BJ (cell line): ENCODE measurements at regions of chr5 and their contacts with region 1.

Region 1: GRCh38 chr5:88729084-88729828 is 153.7 kb downstream of the MEF2C start:
- DNase-seq: peak; percentile 26
- H3K4me3 ChIP-seq: no peak overlapping the region
- H3K27me3 ChIP-seq: no peaks in the 10 kb centered on the region
- CTCF ChIP-seq: peak; percentile 66

Region 2: GRCh38 chr5:87780831-87781760 is 948.2 kb before region 1 on chr5:
- CTCF ChIA-PET with region 1: interaction called, 46 read pairs
- POLR2A ChIA-PET with region 1: no interaction called
- DNase-seq: peak; percentile 2
- H3K4me3 ChIP-seq: no peak overlapping the region
- H3K27me3 ChIP-seq: no peaks in the 10 kb centered on the region
- CTCF ChIP-seq: peak; percentile 95

Region 3: DNA sequence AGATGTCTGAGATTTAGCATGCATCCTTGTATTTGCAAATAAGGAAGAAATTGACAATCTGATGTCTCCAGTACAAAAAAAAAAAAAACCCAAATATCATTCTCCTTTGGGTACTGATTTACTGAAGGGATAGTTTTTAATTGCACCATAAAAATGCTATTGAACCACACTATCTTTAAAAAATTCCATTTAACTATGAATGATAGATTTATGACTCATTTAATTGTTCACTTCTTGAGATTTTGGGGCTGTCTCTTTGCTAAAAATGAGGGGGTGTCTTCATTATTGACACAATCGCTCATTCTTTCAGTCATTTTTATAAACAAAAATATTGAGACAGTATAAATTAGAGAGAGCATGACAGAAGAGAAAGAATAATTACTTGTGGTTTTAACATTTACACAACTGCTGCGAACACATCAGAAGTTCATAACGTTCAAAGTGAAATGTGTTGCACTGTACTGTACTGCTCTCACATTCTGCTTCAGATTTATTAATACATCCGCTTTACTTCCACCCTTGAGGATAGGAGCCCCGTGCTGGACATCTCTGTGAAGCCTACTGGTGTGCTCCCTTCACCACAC is 11.4 kb after region 1 on chr5:
- CTCF ChIA-PET with region 1: interaction called, 10 read pairs
- POLR2A ChIA-PET with region 1: no interaction called
- DNase-seq: no peak
- H3K4me3 ChIP-seq: no peak overlapping the region
- H3K27me3 ChIP-seq: no peaks in the 10 kb centered on the region
- CTCF ChIP-seq: no peak

Region 4: GRCh38 chr5:88845081-88845697 is 115.9 kb after region 1 on chr5:
- CTCF ChIA-PET with region 1: no interaction called
- POLR2A ChIA-PET with region 1: interaction called, 13 read pairs
- DNase-seq: no peak
- H3K4me3 ChIP-seq: no peak overlapping the region
- H3K27me3 ChIP-seq: no peaks in the 10 kb centered on the region
- CTCF ChIP-seq: no peak

Region 5: DNA sequence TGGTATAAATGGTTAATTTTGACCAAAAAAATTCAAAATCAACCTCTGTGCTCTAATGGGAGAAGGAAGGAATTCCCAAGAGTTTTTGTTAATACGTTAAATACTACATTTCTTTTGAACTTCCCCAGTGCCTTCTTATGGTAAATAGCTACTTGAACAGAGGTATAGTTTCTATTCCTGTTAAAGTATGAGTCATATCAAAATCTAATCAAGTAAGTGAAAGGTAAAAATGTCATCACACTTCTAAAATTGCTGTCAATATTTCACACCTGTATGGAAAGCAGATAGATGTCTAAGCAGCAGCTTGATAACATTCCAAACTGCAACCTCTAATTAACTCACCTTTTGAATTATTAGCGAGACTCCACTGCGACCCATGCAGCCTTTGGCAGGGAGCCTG is 367.8 kb after region 1 on chr5:
- CTCF ChIA-PET with region 1: no interaction called
- POLR2A ChIA-PET with region 1: no interaction called
- DNase-seq: no peak
- H3K4me3 ChIP-seq: no peak overlapping the region
- H3K27me3 ChIP-seq: no peaks in the 10 kb centered on the region
- CTCF ChIP-seq: no peak

Region 6: GRCh38 chr5:90264689-90265544 is 1535.7 kb after region 1 on chr5:
- CTCF ChIA-PET with region 1: interaction called, 69 read pairs
- POLR2A ChIA-PET with region 1: no interaction called
- DNase-seq: no peak
- H3K4me3 ChIP-seq: no peak overlapping the region
- H3K27me3 ChIP-seq: no peaks in the 10 kb centered on the region; the same call in 1 of the 2 replicates
- CTCF ChIP-seq: peak; percentile 94